PC-3 (cell line): ENCODE measurements at regions of chr12 and their contacts with region 1.

Region 1: GRCh38 chr12:63826006-63826585 is 18.4 kb upstream of the SRGAP1 start:
- DNase-seq: peak; percentile 80
- ATAC-seq: peak; percentile 84
- H3K4me3 ChIP-seq: no peak overlapping the region
- H3K27ac ChIP-seq: no peak overlapping the region
- H3K4me1 ChIP-seq: no peaks in the 10 kb centered on the region
- H3K27me3 ChIP-seq: no peaks in the 10 kb centered on the region
- CTCF ChIP-seq: peak; percentile 92

Region 2: DNA sequence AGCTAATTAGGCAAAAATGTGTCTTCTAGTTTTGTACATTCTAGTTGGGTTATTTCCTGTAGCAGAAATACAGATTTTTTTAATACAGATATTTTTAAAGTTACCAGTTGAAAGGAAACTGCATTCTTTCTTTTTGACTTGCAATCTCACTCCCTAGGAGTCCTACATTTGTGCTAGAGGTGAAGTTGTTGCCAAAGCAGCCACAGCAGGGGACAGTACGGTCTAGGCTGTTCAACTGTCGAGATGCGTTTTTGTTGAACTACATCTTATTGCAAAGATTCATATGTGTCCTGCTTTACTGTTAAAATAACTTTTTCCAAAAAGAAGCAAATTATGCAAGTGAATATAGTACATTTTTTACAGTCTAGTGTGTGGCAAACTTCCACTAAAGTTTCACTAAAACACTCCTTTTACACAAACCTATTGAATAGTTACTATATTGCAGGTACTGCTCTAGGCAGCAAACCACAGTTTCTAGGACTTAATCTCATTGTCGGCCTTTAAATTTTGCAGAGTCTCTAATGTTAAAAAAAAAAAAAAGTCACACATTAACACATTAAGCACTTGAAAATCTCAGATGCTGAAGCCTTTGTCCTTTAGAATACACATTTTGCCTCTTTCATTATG is 11.8 kb before region 1 on chr12:
- CTCF ChIA-PET with region 1: no interaction called
- POLR2A ChIA-PET with region 1: no interaction called
- intact Hi-C with region 1: no loop called
- DNase-seq: no peak
- ATAC-seq: no peak
- H3K4me3 ChIP-seq: no peak overlapping the region
- H3K27ac ChIP-seq: no peak overlapping the region
- H3K4me1 ChIP-seq: peaks cover 8% of the 10 kb centered on the region
- H3K27me3 ChIP-seq: no peaks in the 10 kb centered on the region
- CTCF ChIP-seq: no peak

Region 3: DNA sequence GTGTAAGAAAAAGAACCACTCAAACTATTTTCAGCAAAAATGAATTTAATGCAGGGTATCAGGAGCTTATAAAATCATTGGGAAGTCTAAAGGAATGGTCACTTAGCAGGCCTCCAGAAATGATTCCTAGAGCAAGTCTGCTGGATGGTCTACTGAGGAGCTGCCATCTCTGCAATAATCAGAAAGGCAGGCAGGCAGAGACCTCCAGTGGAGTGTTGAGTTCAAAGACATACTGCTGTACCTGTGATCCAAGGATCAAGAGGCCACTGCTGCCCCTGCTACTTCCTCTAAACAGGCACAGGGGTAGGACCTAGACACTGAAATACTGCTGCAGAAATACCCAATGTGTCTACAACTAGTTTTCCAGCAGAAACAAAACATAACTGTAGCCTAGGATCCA is 410.5 kb after region 1 on chr12:
- CTCF ChIA-PET with region 1: no interaction called
- POLR2A ChIA-PET with region 1: no interaction called
- intact Hi-C with region 1: loop called (anchors 1 kb)
- DNase-seq: peak; percentile 35
- ATAC-seq: peak; percentile 81
- H3K4me3 ChIP-seq: no peak overlapping the region
- H3K27ac ChIP-seq: no peak overlapping the region
- H3K4me1 ChIP-seq: no peaks in the 10 kb centered on the region
- H3K27me3 ChIP-seq: no peaks in the 10 kb centered on the region
- CTCF ChIP-seq: no peak; the same call in 1 of the 2 replicates

Region 4: GRCh38 chr12:64256166-64256800 is 430.2 kb after region 1 on chr12:
- CTCF ChIA-PET with region 1: no interaction called
- POLR2A ChIA-PET with region 1: no interaction called
- intact Hi-C with region 1: loop called (anchors 1 kb)
- DNase-seq: peak; percentile 85
- ATAC-seq: peak; percentile 38
- H3K4me3 ChIP-seq: no peak overlapping the region
- H3K27ac ChIP-seq: no peak overlapping the region
- H3K4me1 ChIP-seq: no peaks in the 10 kb centered on the region
- H3K27me3 ChIP-seq: no peaks in the 10 kb centered on the region
- CTCF ChIP-seq: peak; percentile 89

Region 5: GRCh38 chr12:64392221-64392620 is 566.1 kb after region 1 on chr12:
- CTCF ChIA-PET with region 1: no interaction called
- POLR2A ChIA-PET with region 1: no interaction called
- intact Hi-C with region 1: loop called (anchors 1 kb)
- DNase-seq: peak; percentile 76
- ATAC-seq: peak; percentile 63
- H3K4me3 ChIP-seq: no peak overlapping the region
- H3K27ac ChIP-seq: no peak overlapping the region
- H3K4me1 ChIP-seq: peaks cover 13% of the 10 kb centered on the region
- H3K27me3 ChIP-seq: no peaks in the 10 kb centered on the region
- CTCF ChIP-seq: peak; percentile 69